Mammary epithelial cell (primary cell): ENCODE measurements at regions of chr6 and their contacts with region 1.

Region 1: GRCh38 chr6:138736640-138737039 is 36.9 kb upstream of the CCDC28A start:
- DNase-seq: no peak
- H3K4me3 ChIP-seq: no peak overlapping the region
- H3K27ac ChIP-seq: no peak overlapping the region
- H3K4me1 ChIP-seq: no peaks in the 10 kb centered on the region
- H3K27me3 ChIP-seq: no peaks in the 10 kb centered on the region
- CTCF ChIP-seq: no peak

Region 2: GRCh38 chr6:137011406-137011805 is 1725.2 kb before region 1 on chr6:
- CTCF ChIA-PET with region 1: no interaction called
- dilution Hi-C with region 1: no loop called
- in situ Hi-C with region 1: no loop called
- intact Hi-C with region 1: no loop called
- DNase-seq: no peak
- H3K4me3 ChIP-seq: no peak overlapping the region
- H3K27ac ChIP-seq: no peak overlapping the region
- H3K4me1 ChIP-seq: peaks cover 13% of the 10 kb centered on the region
- H3K27me3 ChIP-seq: peaks cover 4% of the 10 kb centered on the region
- CTCF ChIP-seq: no peak

Region 3: GRCh38 chr6:138638604-138639003 is 98.0 kb before region 1 on chr6:
- CTCF ChIA-PET with region 1: no interaction called
- dilution Hi-C with region 1: loop called (anchors 5 kb)
- in situ Hi-C with region 1: no loop called
- intact Hi-C with region 1: no loop called
- DNase-seq: no peak
- H3K4me3 ChIP-seq: no peak overlapping the region
- H3K27ac ChIP-seq: no peak overlapping the region
- H3K4me1 ChIP-seq: no peaks in the 10 kb centered on the region
- H3K27me3 ChIP-seq: no peaks in the 10 kb centered on the region
- CTCF ChIP-seq: no peak

Region 4: GRCh38 chr6:138654715-138655634 is 81.7 kb before region 1 on chr6:
- CTCF ChIA-PET with region 1: no interaction called
- dilution Hi-C with region 1: no loop called
- in situ Hi-C with region 1: no loop called
- intact Hi-C with region 1: no loop called
- DNase-seq: peak; percentile 78
- H3K4me3 ChIP-seq: peak overlapping the region; percentile 11 to 35 (median 30)
- H3K27ac ChIP-seq: peak overlapping the region; percentile 76
- H3K4me1 ChIP-seq: peaks cover 37% of the 10 kb centered on the region
- H3K27me3 ChIP-seq: no peaks in the 10 kb centered on the region
- CTCF ChIP-seq: no peak

Region 5: GRCh38 chr6:139392794-139393193 is 656.2 kb after region 1 on chr6:
- CTCF ChIA-PET with region 1: no interaction called
- dilution Hi-C with region 1: no loop called
- in situ Hi-C with region 1: no loop called
- intact Hi-C with region 1: no loop called
- DNase-seq: no peak
- H3K4me3 ChIP-seq: no peak overlapping the region
- H3K27ac ChIP-seq: no peak overlapping the region
- H3K4me1 ChIP-seq: no peaks in the 10 kb centered on the region
- H3K27me3 ChIP-seq: no peaks in the 10 kb centered on the region
- CTCF ChIP-seq: no peak